Heart right ventricle (tissue), 16 donors: ENCODE measurements at regions of chr1 and their contacts with region 1.

Region 1: DNA sequence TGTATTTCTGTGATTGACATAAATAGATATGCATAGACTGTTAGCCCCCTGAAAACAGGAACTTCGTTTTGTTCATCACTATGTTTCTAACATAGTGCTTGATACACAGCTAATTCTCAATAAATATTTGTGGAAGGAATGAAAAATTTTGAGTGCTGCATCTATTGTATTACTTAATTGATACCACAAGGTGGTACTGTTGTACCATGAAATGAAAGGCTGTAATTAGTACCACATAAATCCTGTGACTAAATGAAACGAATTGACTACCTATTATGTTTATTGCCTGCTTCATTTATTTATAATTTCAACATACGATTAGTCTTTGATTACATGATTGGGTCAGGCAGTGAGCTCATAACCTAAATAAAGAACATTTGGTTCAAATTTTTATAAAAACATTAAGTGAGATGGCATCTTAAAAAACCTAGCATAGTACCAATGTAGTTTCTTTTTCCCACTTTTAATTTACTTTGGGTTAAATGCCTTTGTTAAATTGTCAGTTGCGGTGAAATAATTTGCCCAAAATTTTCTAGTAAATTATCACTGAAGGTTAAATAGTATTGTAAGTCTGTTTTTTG is 15.0 kb upstream of the TGFB2 start:
- DNase-seq: no peak
- ATAC-seq: peak in 2 of 8 donors; percentile 37 to 45
- H3K4me3 ChIP-seq: no peak overlapping the region
- H3K27ac ChIP-seq: no peak overlapping the region
- H3K4me1 ChIP-seq: no peaks in the 10 kb centered on the region
- H3K27me3 ChIP-seq: no peaks in the 10 kb centered on the region
- CTCF ChIP-seq: peak; percentile 31 to 86 (median 69)

Region 2: GRCh38 chr1:218345673-218346390 is 15.7 kb after region 1 on chr1:
- intact Hi-C with region 1: no loop called
- DNase-seq: peak; percentile 53 to 72
- ATAC-seq: peak; percentile 77 to 93 (median 82)
- H3K4me3 ChIP-seq: peak overlapping the region; percentile 65 to 86 (median 70)
- H3K27ac ChIP-seq: peak overlapping the region; percentile 39 to 95 (median 83)
- H3K4me1 ChIP-seq: peaks cover 0 to 46% (median 23%) of the 10 kb centered on the region in 9 donors
- H3K27me3 ChIP-seq: peaks cover 0 to 34% (median 0%) of the 10 kb centered on the region in 7 donors
- CTCF ChIP-seq: peak in 2 of 9 donors; percentile 16 to 22

Region 3: DNA sequence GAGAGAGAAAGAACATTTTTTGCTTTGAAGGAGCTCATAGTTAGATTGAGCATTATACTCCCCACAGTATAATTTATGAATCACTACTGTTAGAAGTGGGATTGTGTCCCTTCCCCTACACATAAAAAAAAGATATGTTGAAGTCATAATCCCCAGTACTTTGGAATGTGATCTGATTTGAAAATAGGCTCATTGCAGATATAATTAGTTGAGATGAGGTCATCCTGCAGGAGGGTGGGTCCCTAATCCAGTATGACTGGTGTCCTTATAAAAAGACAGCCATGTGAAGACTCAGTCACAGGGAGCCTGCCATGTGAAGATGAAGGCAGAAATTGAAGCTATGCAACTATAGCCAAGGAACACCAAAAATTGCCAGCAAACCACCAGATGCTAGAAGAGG is 91.4 kb after region 1 on chr1:
- intact Hi-C with region 1: no loop called
- DNase-seq: no peak
- ATAC-seq: peak in 2 of 8 donors; percentile 50 to 53
- H3K4me3 ChIP-seq: no peak overlapping the region
- H3K27ac ChIP-seq: no peak overlapping the region
- H3K4me1 ChIP-seq: peaks cover 0 to 12% (median 5%) of the 10 kb centered on the region in 9 donors
- H3K27me3 ChIP-seq: no peaks in the 10 kb centered on the region
- CTCF ChIP-seq: no peak

Region 4: DNA sequence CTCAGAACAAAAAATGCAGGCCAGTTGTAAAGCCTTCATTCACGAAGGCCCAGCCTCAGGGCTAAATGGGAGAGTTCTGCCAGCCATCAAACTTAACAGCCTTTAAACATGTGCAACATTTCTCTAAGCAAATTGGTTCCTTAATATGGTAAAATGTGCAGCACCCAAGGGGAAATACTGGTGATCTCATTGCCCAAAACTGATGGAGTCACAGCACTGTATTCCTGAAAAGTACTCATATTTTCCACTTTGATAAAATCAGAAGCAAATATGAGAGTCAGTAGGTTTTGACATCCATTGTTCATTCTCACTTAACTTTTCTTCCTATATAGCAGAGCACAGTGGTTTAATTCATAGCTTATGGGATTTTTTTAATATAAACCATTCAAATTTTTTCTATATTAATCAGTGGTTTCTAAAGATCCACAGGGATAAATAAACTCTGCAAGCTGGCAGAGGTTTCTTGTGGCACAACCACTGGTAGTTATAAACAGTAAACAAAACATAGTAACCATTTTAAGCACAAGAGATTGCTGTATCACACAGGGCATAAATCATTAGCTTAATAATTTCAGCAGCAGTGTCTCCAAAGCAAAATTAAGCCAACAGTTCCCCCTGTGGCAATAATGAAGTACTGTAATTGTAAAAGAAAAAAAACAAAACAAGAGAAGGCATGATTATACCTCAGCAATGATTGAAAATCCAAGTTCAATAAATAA is 736.7 kb after region 1 on chr1:
- intact Hi-C with region 1: loop called in 5 of 10 experiments (anchors 5 kb)
- DNase-seq: peak in 1 of 2 donors; percentile 5
- ATAC-seq: peak in 7 of 8 donors; percentile 50 to 79 (median 71)
- H3K4me3 ChIP-seq: no peak overlapping the region
- H3K27ac ChIP-seq: peak overlapping the region in 2 of 10 donors; percentile 17 to 26
- H3K4me1 ChIP-seq: peaks cover 0 to 11% (median 6%) of the 10 kb centered on the region in 9 donors
- H3K27me3 ChIP-seq: no peaks in the 10 kb centered on the region
- CTCF ChIP-seq: peak; percentile 42 to 73 (median 59)

Region 5: DNA sequence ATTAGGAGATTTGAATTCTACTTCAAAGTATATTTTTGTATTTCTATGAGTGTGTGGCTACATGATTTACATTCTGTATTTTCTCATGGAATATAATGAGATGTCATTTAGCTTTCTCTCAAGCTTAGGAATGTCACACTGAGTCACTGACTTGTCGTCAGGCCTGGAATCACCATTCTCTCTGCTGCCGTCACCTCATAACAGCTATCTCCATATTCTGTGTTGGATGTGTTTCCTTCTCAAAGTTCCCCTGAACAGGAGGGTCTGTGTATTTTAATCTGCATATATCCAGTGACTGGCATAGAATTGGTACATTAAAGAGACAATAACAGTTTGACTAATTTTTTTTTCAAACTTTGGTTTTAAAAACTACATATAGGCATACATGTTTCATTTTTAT is 879.4 kb after region 1 on chr1:
- intact Hi-C with region 1: loop called in 1 of 10 experiments (anchors 10 kb)
- DNase-seq: no peak
- ATAC-seq: peak in 6 of 8 donors; percentile 52 to 88 (median 66)
- H3K4me3 ChIP-seq: no peak overlapping the region
- H3K27ac ChIP-seq: no peak overlapping the region
- H3K4me1 ChIP-seq: peaks cover 0 to 7% (median 0%) of the 10 kb centered on the region in 9 donors
- H3K27me3 ChIP-seq: no peaks in the 10 kb centered on the region
- CTCF ChIP-seq: no peak

Region 6: DNA sequence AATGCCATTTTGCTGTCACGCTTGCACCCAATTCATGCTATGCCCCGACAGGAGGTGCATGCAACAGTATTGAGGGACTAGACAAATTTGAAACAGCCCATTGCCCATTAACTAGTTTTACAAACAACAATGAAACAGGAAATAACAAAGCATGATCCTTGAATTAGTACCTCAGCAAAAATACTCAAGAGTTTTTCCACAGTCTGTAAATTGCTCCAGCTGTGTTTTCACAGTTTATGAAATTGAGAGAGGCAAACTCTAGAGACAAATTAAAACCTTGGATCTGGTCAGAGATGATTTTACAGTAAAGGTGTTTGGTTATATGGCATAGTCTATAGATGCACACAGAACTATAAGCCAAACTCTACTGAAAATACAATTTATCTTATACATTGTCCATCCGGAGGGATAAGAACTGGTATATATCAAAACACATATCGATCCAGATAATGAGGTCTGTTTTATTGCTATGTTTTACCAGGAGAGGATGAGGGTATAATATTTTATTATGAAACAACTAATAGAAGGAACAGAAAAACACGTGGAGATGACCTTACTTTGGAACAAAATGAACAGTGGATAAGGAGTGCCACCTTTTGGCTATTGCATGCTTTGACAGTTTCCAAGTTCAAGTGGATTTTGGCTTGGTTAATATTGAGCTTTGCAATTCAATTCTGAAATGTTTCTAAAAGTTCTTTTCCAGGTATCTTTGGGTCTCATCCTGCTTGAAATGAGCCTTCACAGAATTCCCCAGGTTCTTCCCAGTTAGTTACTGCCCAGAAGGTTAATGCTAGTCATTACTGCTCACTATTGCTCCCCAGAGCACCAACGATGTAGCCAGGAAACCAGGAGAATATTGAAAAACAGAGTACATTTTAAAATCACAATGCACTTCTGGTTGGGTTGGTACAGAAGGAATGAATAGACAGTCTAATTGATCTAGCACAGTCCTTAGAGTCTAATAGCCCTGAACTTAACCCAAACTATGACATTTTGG is 1237.1 kb after region 1 on chr1:
- intact Hi-C with region 1: loop called in 8 of 10 experiments (anchors 5 to 10 kb)
- DNase-seq: peak in 1 of 2 donors; percentile 15
- ATAC-seq: peak in 7 of 8 donors; percentile 44 to 77 (median 65)
- H3K4me3 ChIP-seq: no peak overlapping the region
- H3K27ac ChIP-seq: no peak overlapping the region
- H3K4me1 ChIP-seq: peaks cover 0 to 8% (median 0%) of the 10 kb centered on the region in 9 donors
- H3K27me3 ChIP-seq: no peaks in the 10 kb centered on the region
- CTCF ChIP-seq: peak in 8 of 9 donors; percentile 19 to 71 (median 58)